ENCODE measurements at regions of chr1 and their contacts with region 1.

Region 1: GRCh38 chr1:78607334-78607927 is 12.8 kb upstream of the IFI44L start:
- DNase-seq: no peak
- ATAC-seq: peak; percentile 56

Region 2: DNA sequence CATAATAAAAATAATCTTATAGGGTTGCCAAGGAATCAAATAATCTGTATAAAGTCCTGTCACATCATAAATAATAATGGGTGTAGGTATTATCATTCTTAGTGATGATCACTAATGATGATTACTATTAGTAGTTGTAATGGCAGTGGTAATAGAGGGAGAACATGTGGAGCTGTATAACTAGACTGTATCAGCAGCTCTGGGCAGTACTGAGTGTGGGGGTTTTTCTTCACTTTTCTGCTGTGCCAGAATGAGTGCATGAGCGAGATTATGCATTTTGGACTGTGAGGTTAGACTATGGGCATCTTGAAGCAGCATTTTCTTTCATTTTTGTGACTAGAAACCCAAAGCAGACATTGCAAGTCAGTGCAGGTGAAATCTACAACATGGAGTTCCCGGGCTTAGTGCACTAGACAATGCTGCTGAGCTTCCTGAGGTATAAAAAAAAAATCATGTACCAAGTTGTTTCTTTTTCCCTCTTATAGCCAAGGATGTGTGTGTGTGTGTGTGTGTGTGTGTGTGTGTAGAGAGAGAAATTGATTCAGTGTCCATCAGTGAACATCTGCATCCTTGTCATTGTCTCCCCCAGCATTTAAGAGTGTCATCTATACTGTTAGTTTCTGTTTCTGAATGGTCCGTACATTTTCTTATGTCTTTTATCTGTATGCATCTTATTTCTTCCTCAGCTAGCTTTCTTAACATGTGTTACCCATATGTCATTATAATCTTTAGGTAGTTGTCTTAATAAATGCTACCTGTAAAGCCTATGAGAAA is 475.1 kb before region 1 on chr1:
- intact Hi-C with region 1: loop called in 1 of 2 experiments (anchors 10 kb)
- DNase-seq: no peak
- ATAC-seq: no peak

Region 3: GRCh38 chr1:78145105-78145580 is 462.3 kb before region 1 on chr1:
- intact Hi-C with region 1: loop called in 1 of 2 experiments (anchors 5 kb)
- DNase-seq: peak in 1 of 2 donors; percentile 45
- ATAC-seq: peak; percentile 62

Region 4: GRCh38 chr1:79010589-79010988 is 403.2 kb after region 1 on chr1:
- intact Hi-C with region 1: no loop called
- DNase-seq: no peak
- ATAC-seq: no peak

Measured in left colon (tissue), 2 donors.